CD14-positive monocyte (primary cell): ENCODE measurements at regions of chr14 and their contacts with region 1.

Region 1: GRCh38 chr14:50055461-50056228 is 60.7 kb downstream of the VCPKMT start:
- DNase-seq: peak; percentile 76 to 82 (median 80)
- H3K4me3 ChIP-seq: no peak overlapping the region
- H3K4me3 Mint-ChIP-seq: peak overlapping the region; percentile 28 to 43
- H3K27ac ChIP-seq: peak overlapping the region; percentile 19 to 57
- H3K27ac Mint-ChIP-seq: peak overlapping the region; percentile 32 to 87 (median 84)
- H3K4me1 ChIP-seq: peaks cover 41 to 45% of the 10 kb centered on the region in 2 donors
- H3K4me1 Mint-ChIP-seq: peaks cover 45% of the 10 kb centered on the region
- H3K27me3 ChIP-seq: no peaks in the 10 kb centered on the region
- H3K27me3 Mint-ChIP-seq: peaks cover 0 to 6% (median 2%) of the 10 kb centered on the region in 3 donors
- CTCF ChIP-seq: peak; percentile 73

Region 2: GRCh38 chr14:49934646-49935045 is 121.0 kb before region 1 on chr14:
- intact Hi-C with region 1: no loop called
- DNase-seq: peak in 1 of 3 donors; percentile 14
- H3K4me3 ChIP-seq: no peak overlapping the region
- H3K4me3 Mint-ChIP-seq: no peak overlapping the region
- H3K27ac ChIP-seq: no peak overlapping the region
- H3K27ac Mint-ChIP-seq: peak overlapping the region in 2 of 7 donors; percentile 26 to 37
- H3K4me1 ChIP-seq: peaks cover 3 to 4% of the 10 kb centered on the region in 2 donors
- H3K4me1 Mint-ChIP-seq: peaks cover 20% of the 10 kb centered on the region
- H3K27me3 ChIP-seq: no peaks in the 10 kb centered on the region
- H3K27me3 Mint-ChIP-seq: peaks cover 0 to 4% (median 0%) of the 10 kb centered on the region in 3 donors
- CTCF ChIP-seq: no peak

Region 3: GRCh38 chr14:50101417-50101816 is 45.8 kb after region 1 on chr14:
- intact Hi-C with region 1: loop called (anchors 5 kb)
- DNase-seq: no peak
- H3K4me3 ChIP-seq: no peak overlapping the region
- H3K4me3 Mint-ChIP-seq: no peak overlapping the region
- H3K27ac ChIP-seq: no peak overlapping the region
- H3K27ac Mint-ChIP-seq: no peak overlapping the region
- H3K4me1 ChIP-seq: peaks cover 5 to 9% of the 10 kb centered on the region in 2 donors
- H3K4me1 Mint-ChIP-seq: peaks cover 11% of the 10 kb centered on the region
- H3K27me3 ChIP-seq: no peaks in the 10 kb centered on the region
- H3K27me3 Mint-ChIP-seq: peaks cover 0 to 2% (median 0%) of the 10 kb centered on the region in 3 donors
- CTCF ChIP-seq: no peak